ENCODE measurements at regions of chr3 and their contacts with region 1.

Region 1: DNA sequence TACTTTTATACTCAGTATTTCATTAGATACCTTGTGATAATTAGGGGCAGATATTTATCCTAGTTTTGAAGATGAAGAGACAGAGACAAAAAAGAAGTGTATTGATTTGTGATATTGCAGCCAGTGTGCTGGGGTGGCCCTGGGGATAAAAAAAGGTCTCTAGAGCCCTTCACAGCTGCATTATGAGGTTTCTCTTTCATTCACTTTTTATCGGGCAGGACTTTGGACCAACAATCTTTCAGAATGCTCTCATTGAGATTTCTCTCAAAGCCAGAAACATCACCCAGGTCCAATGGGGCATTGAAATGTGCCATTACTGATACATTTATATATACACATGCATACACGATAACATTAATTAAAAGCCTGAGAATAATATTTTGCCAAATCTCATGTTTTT is 20.5 kb upstream of the SELENOT start:
- DNase-seq: no peak
- ATAC-seq: peak; percentile 7
- H3K4me3 Mint-ChIP-seq: no peak overlapping the region
- H3K27ac Mint-ChIP-seq: peak overlapping the region; percentile 63
- H3K4me1 Mint-ChIP-seq: peaks cover 14% of the 10 kb centered on the region
- H3K27me3 Mint-ChIP-seq: no peaks in the 10 kb centered on the region
- CTCF ChIP-seq: no peak

Region 2: GRCh38 chr3:149596136-149596770 is 986.4 kb before region 1 on chr3:
- CTCF ChIA-PET with region 1: no interaction called
- POLR2A ChIA-PET with region 1: no interaction called
- intact Hi-C with region 1: no loop called
- DNase-seq: no peak
- ATAC-seq: no peak
- H3K4me3 Mint-ChIP-seq: no peak overlapping the region
- H3K27ac Mint-ChIP-seq: no peak overlapping the region
- H3K4me1 Mint-ChIP-seq: no peaks in the 10 kb centered on the region
- H3K27me3 Mint-ChIP-seq: peaks cover 2% of the 10 kb centered on the region
- CTCF ChIP-seq: no peak

Region 3: DNA sequence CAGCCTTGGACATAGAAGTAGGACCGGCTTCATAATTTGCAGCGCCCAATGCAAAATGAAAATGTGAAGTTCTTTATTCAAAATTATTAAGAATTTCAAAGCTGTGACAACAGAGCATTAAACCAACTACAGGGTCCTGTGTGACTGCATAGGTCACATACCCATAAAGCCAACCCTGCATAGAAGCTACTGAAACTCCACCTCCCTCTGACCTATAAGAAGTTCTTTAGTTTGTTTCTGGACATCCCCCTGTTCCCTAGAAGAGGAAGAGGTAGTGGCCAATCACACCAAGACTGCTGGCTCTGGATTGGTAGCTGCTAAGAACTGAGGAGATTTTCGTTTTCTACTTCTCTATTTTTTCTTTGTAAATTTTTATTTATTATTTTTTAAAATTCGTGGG is 11.5 kb after region 1 on chr3:
- CTCF ChIA-PET with region 1: interaction called, 12 read pairs
- POLR2A ChIA-PET with region 1: no interaction called
- intact Hi-C with region 1: no loop called
- DNase-seq: no peak
- ATAC-seq: peak; percentile 71
- H3K4me3 Mint-ChIP-seq: no peak overlapping the region
- H3K27ac Mint-ChIP-seq: no peak overlapping the region
- H3K4me1 Mint-ChIP-seq: peaks cover 14% of the 10 kb centered on the region
- H3K27me3 Mint-ChIP-seq: no peaks in the 10 kb centered on the region
- CTCF ChIP-seq: no peak